Caco-2 (cell line): ENCODE measurements at regions of chr13 and their contacts with region 1.

Region 1: DNA sequence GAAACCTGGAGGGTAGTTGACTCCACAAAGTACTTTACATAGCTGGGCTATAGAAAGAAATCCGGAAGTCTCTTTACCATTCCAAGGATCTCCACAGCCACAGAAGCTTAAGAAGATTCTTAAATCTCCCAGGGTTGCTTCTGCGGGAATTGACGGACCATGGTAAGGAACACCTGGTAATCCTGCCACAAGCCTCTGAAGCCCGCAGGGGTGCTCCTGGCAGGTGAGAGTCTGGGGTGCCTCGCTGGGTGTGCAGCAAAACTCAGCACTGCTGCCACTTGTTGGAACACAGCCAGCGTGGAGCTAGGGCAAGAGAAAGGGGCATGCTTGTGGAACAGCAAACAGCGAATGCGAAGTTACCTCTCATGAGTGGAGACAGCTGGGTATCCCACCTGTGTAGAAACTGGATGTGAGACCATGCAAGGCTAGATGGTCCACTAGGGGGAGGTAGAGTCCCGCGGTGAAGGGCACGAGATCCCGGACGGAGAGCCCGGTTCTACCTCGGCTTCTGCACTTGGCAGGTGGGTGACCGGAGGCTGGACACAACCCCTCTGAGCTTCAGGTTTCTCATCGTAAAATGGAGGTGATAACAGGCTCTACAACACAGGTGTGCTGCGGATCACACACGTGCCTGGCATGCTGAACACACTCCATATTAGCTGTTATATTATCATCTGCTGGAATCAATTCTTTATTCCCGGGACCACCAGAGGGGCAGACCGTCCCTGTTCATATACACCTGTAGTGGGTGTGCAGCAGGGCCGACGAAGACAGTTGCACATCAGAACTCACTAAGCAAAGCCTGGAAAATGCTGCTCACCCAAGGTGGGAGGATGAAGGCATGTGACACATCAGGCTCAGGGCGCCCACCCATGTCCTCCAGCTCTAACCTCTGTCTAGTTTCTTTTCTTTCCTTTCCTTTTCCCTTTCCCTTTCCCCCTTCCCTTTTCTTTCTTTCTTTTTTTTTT is 24.1 kb upstream of the UBAC2 start:
- DNase-seq: peak; percentile 83 to 90
- H3K4me3 ChIP-seq: no peak overlapping the region
- H3K4me3 Mint-ChIP-seq: no peak overlapping the region
- H3K27ac Mint-ChIP-seq: no peak overlapping the region
- H3K4me1 ChIP-seq: peaks cover 5% of the 10 kb centered on the region; the same call in 1 of the 2 replicates
- H3K4me1 Mint-ChIP-seq: no peaks in the 10 kb centered on the region
- H3K27me3 ChIP-seq: no peaks in the 10 kb centered on the region
- H3K27me3 Mint-ChIP-seq: no peaks in the 10 kb centered on the region
- CTCF ChIP-seq: peak; percentile 96

Region 2: GRCh38 chr13:98495627-98496478 is 680.7 kb before region 1 on chr13:
- CTCF ChIA-PET with region 1: no interaction called
- POLR2A ChIA-PET with region 1: no interaction called
- intact Hi-C with region 1: no loop called
- DNase-seq: no peak
- H3K4me3 ChIP-seq: no peak overlapping the region
- H3K4me3 Mint-ChIP-seq: no peak overlapping the region
- H3K27ac Mint-ChIP-seq: peak overlapping the region; percentile 55
- H3K4me1 ChIP-seq: peaks cover 24% of the 10 kb centered on the region; the same call in 1 of the 2 replicates
- H3K4me1 Mint-ChIP-seq: peaks cover 35% of the 10 kb centered on the region
- H3K27me3 ChIP-seq: no peaks in the 10 kb centered on the region
- H3K27me3 Mint-ChIP-seq: no peaks in the 10 kb centered on the region
- CTCF ChIP-seq: no peak

Region 3: DNA sequence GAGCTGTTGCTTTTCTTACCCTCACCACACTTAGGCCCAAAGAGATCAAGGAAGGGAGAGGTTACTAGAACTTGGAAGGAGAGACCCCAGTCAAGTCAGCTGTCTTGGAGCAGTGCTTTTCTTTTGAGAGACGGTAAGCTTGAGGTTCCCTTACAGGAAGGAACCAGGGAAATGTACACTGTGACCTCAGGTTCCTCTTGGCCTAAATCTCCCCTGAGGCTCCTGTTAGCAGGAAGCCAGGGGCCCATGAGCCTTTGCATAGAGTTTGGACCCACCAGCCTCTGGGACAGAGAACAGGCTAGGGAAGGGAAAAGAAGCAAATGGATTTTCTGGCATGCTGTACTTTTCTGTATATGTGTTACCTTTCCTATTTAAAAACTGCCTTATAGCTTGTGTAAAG is 87.5 kb after region 1 on chr13:
- CTCF ChIA-PET with region 1: interaction called, 23 read pairs
- POLR2A ChIA-PET with region 1: no interaction called
- intact Hi-C with region 1: loop called (anchors 1 kb)
- DNase-seq: no peak
- H3K4me3 ChIP-seq: no peak overlapping the region
- H3K4me3 Mint-ChIP-seq: no peak overlapping the region
- H3K27ac Mint-ChIP-seq: no peak overlapping the region
- H3K4me1 ChIP-seq: no peaks in the 10 kb centered on the region
- H3K4me1 Mint-ChIP-seq: no peaks in the 10 kb centered on the region
- H3K27me3 ChIP-seq: no peaks in the 10 kb centered on the region
- H3K27me3 Mint-ChIP-seq: no peaks in the 10 kb centered on the region
- CTCF ChIP-seq: no peak